ENCODE measurements at regions of chr19 and their contacts with region 1.

Region 1: DNA sequence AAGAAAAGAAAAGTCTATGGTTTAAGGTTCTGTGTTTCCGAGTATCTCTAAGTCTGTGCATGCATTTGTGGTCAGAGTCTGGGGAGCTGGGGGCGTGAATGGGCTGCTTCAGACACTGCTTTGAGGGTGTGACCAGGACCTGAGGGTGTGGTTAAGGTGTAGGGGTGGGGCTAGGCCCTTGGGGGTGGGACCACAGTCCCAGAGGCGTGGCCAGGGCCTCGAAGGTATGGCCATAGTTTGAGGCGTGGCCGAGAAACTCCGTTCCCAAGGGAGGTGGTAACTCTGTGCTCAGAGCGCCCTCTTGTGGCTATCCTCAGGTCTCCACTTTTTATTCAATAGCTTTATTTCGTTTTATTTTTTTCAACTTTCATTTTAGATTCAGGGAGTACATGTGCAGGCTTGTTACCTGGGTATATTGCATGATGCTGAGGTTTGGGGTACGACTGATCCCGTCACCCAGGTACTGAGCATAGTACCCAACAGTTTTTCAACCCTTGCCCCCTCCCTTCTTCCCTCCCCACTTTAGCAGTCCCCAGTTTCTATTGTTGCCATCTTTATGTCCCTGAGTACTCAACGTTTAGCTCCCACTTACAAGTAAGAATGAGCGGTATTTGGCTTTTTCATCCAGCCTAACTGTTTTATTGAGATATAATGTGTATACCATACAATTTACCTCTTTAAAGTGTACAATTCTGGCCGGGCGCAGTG is 7.0 kb upstream of the CBLC start:
- DNase-seq: peak; percentile 90 to 99
- H3K4me3 ChIP-seq: no peak overlapping the region
- H3K27ac ChIP-seq: no peak overlapping the region
- H3K4me1 ChIP-seq: peaks cover 0 to 2% (median under 1%) of the 10 kb centered on the region in 4 experiments; a peak in 2 of 7 replicates
- H3K27me3 ChIP-seq: no peaks in the 10 kb centered on the region; a peak in 2 of 7 replicates
- CTCF ChIP-seq: peak; percentile 56 to 85 (median 76)
- EP300 ChIP-seq: no peak
- POLR2A ChIP-seq: no peak
- RAD21 ChIP-seq: peak; percentile 93 to 96

Region 2: GRCh38 chr19:44620667-44621066 is 150.0 kb before region 1 on chr19:
- CTCF ChIA-PET with region 1: no interaction called
- POLR2A ChIA-PET with region 1: no interaction called
- DNase-seq: no peak
- H3K4me3 ChIP-seq: no peak overlapping the region
- H3K27ac ChIP-seq: no peak overlapping the region
- H3K4me1 ChIP-seq: no peaks in the 10 kb centered on the region
- H3K27me3 ChIP-seq: no peaks in the 10 kb centered on the region; a peak in 1 of 7 replicates
- CTCF ChIP-seq: no peak
- EP300 ChIP-seq: no peak
- POLR2A ChIP-seq: no peak
- RAD21 ChIP-seq: no peak

Region 3: GRCh38 chr19:44653977-44654774 is 116.5 kb before region 1 on chr19:
- CTCF ChIA-PET with region 1: interaction called, 20 read pairs
- POLR2A ChIA-PET with region 1: interaction called, 3 read pairs
- DNase-seq: peak in 1 of 2 experiments; percentile 83
- H3K4me3 ChIP-seq: no peak overlapping the region
- H3K27ac ChIP-seq: no peak overlapping the region
- H3K4me1 ChIP-seq: peaks cover 0 to 2% (median 0%) of the 10 kb centered on the region in 4 experiments; a peak in 2 of 7 replicates
- H3K27me3 ChIP-seq: no peaks in the 10 kb centered on the region
- CTCF ChIP-seq: peak; percentile 71 to 82 (median 75)
- EP300 ChIP-seq: no peak
- POLR2A ChIP-seq: no peak
- RAD21 ChIP-seq: peak; percentile 69 to 77

Region 4: GRCh38 chr19:44696939-44697669 is 73.6 kb before region 1 on chr19:
- CTCF ChIA-PET with region 1: interaction called, 14 read pairs
- POLR2A ChIA-PET with region 1: no interaction called
- DNase-seq: no peak
- H3K4me3 ChIP-seq: no peak overlapping the region
- H3K27ac ChIP-seq: no peak overlapping the region
- H3K4me1 ChIP-seq: peaks cover 0 to 7% (median 2%) of the 10 kb centered on the region in 4 experiments; a peak in 5 of 7 replicates
- H3K27me3 ChIP-seq: no peaks in the 10 kb centered on the region
- CTCF ChIP-seq: no peak
- EP300 ChIP-seq: no peak
- POLR2A ChIP-seq: no peak
- RAD21 ChIP-seq: no peak

Region 5: DNA sequence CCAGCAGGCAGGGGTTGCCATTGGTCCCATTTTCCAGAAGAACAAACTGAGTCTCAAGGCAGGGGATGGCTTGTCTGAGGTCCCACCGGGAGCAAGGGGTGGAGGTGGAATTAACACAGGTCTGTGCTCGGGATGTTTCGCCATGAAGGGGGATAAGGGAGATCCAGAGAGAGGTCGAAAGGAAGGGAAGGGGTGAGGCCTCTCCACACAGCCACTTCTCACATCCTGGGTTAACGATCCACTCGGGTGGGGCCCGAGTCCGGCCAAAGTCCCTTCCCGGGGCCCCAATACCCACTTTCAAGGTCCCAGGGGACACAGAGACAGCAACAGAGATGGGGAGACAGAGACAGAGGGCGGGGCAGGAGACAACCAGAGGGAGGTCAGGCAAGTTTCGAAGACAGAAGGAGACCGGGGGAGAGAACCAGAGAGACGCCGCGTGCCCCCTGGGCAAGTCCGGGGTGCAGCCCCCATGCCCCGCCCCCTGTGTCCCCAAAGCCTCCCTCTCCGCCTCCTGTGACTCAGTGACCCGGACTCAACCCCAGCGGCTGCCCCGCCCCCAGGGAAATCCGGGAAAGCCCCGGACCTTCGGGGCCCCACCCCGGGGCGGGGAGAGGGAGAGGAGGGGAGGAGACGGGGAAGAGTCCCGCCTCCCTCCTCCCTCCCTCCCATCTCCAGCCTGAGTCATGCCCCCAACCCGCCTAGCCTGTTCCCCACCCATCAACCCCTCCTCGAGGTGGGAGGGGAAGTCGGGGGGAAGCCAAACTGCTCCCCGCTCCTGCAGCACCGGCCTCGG is 23.6 kb before region 1 on chr19:
- CTCF ChIA-PET with region 1: interaction called, 56 read pairs
- POLR2A ChIA-PET with region 1: interaction called, 5 read pairs
- DNase-seq: peak in 1 of 2 experiments; percentile 92
- H3K4me3 ChIP-seq: peak overlapping the region; percentile 43 to 65 (median 52)
- H3K27ac ChIP-seq: no peak overlapping the region
- H3K4me1 ChIP-seq: peaks cover 0 to 3% (median 1%) of the 10 kb centered on the region in 4 experiments; a peak in 2 of 7 replicates
- H3K27me3 ChIP-seq: peaks cover 22 to 61% (median 46%) of the 10 kb centered on the region in 4 experiments
- CTCF ChIP-seq: no peak
- EP300 ChIP-seq: 0 out of 3 replicates have a peak, but pooled peaks of 1 of the 2 experiments have one; percentile 48
- POLR2A ChIP-seq: no peak
- RAD21 ChIP-seq: no peak

Region 6: DNA sequence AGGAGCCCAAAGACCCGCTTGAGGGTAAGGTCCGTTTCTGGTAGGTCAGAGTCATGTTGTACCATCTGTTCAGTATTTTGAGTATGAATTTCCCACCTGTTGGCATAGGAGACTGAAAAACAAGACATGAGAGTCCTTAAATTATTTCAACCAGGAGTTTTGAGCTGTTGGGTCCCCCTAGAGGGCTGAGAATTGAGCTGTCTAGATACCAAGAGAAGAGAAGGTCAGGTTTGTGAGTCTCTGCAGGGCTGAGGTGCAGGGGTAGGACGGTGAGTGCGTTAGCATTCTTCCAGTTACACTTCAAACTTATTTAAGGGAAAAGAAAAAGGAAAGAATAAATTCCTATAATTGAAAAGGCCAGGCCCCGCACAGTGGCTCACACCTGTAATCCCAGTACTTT is 12.0 kb after region 1 on chr19:
- CTCF ChIA-PET with region 1: interaction called, 42 read pairs
- POLR2A ChIA-PET with region 1: no interaction called
- DNase-seq: no peak
- H3K4me3 ChIP-seq: no peak overlapping the region
- H3K27ac ChIP-seq: no peak overlapping the region
- H3K4me1 ChIP-seq: no peaks in the 10 kb centered on the region
- H3K27me3 ChIP-seq: no peaks in the 10 kb centered on the region
- CTCF ChIP-seq: no peak
- EP300 ChIP-seq: no peak
- POLR2A ChIP-seq: no peak
- RAD21 ChIP-seq: 0 out of 4 replicates have a peak, but pooled peaks of 1 of the 2 experiments have one; percentile 5

Region 7: DNA sequence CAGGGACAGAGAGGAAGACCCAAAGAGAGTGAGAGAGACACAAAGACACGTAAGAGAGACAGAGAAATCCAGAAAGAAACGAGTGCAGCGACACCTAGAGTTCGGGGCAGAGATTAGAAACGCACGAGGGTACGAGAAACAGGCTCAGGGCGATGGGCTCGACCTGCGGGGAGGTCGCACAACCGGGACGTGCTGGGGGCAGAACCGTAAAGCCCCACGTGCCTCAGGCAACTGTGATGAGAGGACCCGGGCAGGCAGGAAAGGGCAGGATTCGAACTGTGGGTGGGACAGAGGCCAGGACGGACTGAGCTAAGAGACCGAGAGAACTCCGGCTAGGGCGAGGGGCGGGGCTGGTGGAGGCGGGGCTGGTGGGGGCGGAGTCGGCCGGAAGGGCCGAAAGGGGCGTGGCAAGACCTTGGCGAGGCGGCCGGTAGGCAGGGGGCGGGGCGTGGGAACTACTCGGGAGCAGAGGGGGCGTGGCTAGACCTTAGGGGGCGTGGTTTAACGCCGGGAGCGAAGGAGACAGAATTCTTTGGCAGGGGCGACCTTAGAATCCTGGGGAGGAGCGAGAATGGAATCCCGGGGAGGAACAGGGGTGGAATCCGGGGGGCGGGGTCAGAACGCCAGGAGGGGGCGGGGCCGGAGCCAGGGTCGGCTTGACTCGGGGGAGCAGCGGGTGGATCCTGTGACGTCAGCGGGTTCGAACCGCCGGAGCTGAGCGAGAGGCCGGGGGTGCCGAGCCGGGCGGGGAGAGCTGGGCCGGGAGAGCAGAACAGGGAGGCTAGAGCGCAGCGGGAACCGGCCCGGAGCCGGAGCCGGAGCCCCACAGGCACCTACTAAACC is 75.1 kb after region 1 on chr19 and contains the start of gene NECTIN2:
- CTCF ChIA-PET with region 1: interaction called, 16 read pairs
- POLR2A ChIA-PET with region 1: interaction called, 5 read pairs
- DNase-seq: peak; percentile 97 to 100
- H3K4me3 ChIP-seq: peak within 1 kb of the TSS; percentile 84 to 98 (median 92)
- H3K27ac ChIP-seq: peak within 1 kb of the TSS; percentile 92
- H3K4me1 ChIP-seq: peaks cover 14 to 22% (median 16%) of the 10 kb centered on the region in 4 experiments
- H3K27me3 ChIP-seq: peaks cover 0 to 2% (median 0%) of the 10 kb centered on the region in 4 experiments; a peak in 1 of 7 replicates
- CTCF ChIP-seq: peak; percentile 70 to 97 (median 73)
- EP300 ChIP-seq: 0 out of 3 replicates have a peak, but pooled peaks of 1 of the 2 experiments have one; percentile 32
- POLR2A ChIP-seq: peak; percentile 48 to 87
- RAD21 ChIP-seq: peak; percentile 50 to 60
- total RNA-seq, gene NECTIN2: 181 and 184 TPM in 2 replicates